Posterior vena cava (tissue), 2 donors: ENCODE measurements at regions of chr2 and their contacts with region 1.

Region 1: GRCh38 chr2:177106212-177106611 is 106.4 kb upstream of the HNRNPA3 start:
- DNase-seq: no peak

Region 2: GRCh38 chr2:175837046-175837445 is 1269.2 kb before region 1 on chr2:
- intact Hi-C with region 1: loop called in 1 of 2 experiments (anchors 5 kb)
- DNase-seq: no peak

Region 3: GRCh38 chr2:177093371-177093770 is 12.8 kb before region 1 on chr2:
- intact Hi-C with region 1: no loop called
- DNase-seq: no peak

Region 4: GRCh38 chr2:177161744-177162460 is 55.7 kb after region 1 on chr2:
- intact Hi-C with region 1: no loop called
- DNase-seq: no peak